ENCODE measurements at regions of chr9 and their contacts with region 1.

Region 1: DNA sequence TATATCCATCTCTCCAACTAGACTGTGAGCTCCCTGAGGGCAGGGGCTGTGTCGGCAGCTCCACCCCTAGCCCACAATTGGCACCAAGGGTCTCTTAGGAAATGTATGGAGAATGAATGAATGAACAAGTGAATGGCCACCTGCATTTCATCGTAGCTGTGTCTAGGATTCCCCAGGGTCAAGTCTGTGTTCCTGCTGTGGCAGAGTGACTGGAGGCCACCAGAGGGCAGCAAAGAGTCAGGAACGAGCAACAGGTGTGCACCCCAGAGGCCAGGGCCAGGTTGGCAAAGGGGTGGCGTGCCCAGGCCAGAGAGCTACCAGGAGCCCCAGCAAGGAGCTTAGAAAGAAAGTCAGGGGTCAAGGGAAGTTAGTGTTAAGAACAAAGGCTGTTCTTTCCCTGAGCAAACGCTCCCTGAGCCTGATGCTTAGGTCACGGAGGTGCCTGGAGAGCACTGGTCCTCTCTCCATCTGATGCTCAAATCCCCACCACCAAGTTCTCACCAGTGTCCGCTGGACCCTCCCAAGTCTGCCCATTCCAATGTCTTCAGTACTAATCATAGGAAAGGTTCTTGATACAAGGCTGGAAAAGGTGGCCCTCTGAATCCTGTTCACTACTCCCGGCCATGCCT is 160.7 kb downstream of the PAX5 start:
- DNase-seq: peak; percentile 90
- H3K4me3 Mint-ChIP-seq: no peak overlapping the region
- H3K27ac Mint-ChIP-seq: no peak overlapping the region
- H3K4me1 Mint-ChIP-seq: peaks cover 4% of the 10 kb centered on the region
- H3K27me3 Mint-ChIP-seq: peaks cover 12% of the 10 kb centered on the region

Region 2: DNA sequence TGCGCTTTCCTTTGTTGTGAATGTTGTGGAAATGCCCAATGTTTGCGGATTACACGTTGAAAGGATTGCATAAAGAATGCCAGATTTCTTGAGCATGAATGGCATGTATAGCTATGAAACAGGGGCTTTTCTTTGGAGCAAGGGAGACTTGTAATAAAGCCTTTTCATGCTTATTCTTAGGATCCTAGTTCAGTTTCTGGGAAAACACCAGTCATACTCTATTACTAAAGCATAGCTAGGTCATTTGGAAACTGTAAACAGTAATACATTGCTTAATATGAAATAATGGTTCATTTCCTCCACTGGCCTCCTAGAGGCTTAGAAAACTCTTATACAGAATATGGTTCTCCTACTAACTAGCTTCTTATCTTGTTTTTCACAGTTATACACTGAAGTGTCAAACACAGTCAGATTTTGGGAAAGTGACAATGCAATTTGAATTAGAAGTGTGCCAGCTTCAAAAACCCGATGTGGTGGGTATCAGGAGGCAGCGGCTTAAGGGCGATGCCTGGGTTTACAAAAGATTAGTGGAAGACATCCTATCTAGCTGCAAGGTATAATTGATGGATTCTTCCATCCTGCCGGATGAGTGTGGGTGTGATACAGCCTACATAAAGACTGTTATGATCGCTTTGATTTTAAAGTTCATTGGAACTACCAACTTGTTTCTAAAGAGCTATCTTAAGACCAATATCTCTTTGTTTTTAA is 196.4 kb before region 1 on chr9:
- intact Hi-C with region 1: no loop called
- DNase-seq: no peak
- H3K4me3 Mint-ChIP-seq: no peak overlapping the region
- H3K27ac Mint-ChIP-seq: peak overlapping the region; percentile 55
- H3K4me1 Mint-ChIP-seq: peaks cover 11% of the 10 kb centered on the region
- H3K27me3 Mint-ChIP-seq: no peaks in the 10 kb centered on the region

Region 3: GRCh38 chr9:37364751-37365360 is 491.5 kb after region 1 on chr9:
- intact Hi-C with region 1: loop called (anchors 10 kb)
- DNase-seq: peak; percentile 68
- H3K4me3 Mint-ChIP-seq: no peak overlapping the region
- H3K27ac Mint-ChIP-seq: no peak overlapping the region
- H3K4me1 Mint-ChIP-seq: no peaks in the 10 kb centered on the region
- H3K27me3 Mint-ChIP-seq: no peaks in the 10 kb centered on the region

Measured in activated CD4-positive, alpha-beta T cell treated with anti-CD3 and anti-CD28 coated beads, Interleukin-2, amount 10 ng/mL, durations not matched to agents 24 days and 14 days (primary cell).